ENCODE measurements at regions of chr7 and their contacts with region 1.

Region 1: DNA sequence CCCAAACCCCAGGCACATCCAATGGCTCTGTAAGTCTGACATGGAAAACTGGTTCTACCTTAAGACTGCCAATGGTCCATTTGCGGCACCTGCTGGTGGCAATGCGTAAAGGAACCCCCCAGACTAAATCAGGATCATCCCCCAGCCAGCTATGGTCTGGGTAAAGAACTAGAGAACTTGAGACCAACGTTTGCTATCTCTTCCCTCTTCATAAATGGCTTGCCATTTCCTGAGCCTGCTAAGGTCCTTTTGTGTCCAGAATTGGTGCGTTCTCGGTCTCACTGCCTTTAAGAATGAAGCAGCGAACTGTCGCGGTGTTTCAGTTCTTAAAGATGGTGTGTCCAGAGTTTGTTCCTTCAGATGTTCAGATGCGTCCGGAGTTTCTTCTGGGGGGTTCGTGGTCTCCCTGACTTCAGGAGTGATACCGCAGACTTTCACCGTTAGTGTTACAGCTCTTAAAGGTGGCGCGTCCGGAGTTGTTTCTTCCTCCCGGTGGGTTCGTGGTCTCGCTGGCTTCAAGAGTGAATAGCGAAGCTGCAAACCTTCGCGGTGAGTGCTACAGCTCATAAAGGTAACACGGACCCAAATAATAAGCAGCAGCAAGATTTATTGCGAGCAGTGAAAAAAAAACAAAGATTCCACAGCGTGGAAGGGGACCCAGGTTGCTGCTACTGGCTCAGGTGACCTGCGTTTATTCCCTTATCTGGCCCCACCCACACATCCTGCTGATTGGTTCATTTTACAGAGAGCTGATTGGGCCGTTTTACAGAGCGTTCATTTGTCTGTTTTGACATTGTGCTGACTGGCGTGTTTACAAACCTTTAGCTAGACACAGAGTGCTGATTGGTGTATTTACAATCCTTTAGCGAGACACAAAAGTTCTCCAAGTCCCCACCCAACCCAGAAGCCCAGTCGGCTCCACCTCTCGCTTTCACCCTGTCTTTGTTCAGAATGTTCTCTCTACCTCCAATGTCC is 95.4 kb downstream of the ELMO1 start:
- DNase-seq: peak; percentile 37 to 90 (median 82)
- ATAC-seq: peak; percentile 91
- H3K4me3 ChIP-seq: peak overlapping the region; percentile 93
- H3K4me3 Mint-ChIP-seq: peak overlapping the region; percentile 84 to 98 (median 95)
- H3K27ac ChIP-seq: peak overlapping the region; percentile 75
- H3K27ac Mint-ChIP-seq: peak overlapping the region; percentile 86 to 97 (median 92)
- H3K4me1 ChIP-seq: peaks cover 15 to 44% of the 10 kb centered on the region in 2 donors
- H3K4me1 Mint-ChIP-seq: peaks cover 71 to 97% (median 93%) of the 10 kb centered on the region in 7 donors
- H3K27me3 ChIP-seq: no peaks in the 10 kb centered on the region
- H3K27me3 Mint-ChIP-seq: no peaks in the 10 kb centered on the region

Region 2: GRCh38 chr7:36389371-36390198 is 963.7 kb before region 1 on chr7 and contains the start of gene ANLN:
- CTCF ChIA-PET with region 1: no interaction called
- POLR2A ChIA-PET with region 1: no interaction called
- intact Hi-C with region 1: loop called in 1 of 2 experiments (anchors 5 kb)
- DNase-seq: peak; percentile 71 to 91 (median 82)
- ATAC-seq: peak; percentile 98
- H3K4me3 ChIP-seq: peak within 1 kb of the TSS; percentile 78
- H3K4me3 Mint-ChIP-seq: peak within 1 kb of the TSS; percentile 77 to 90 (median 85)
- H3K27ac ChIP-seq: peak within 1 kb of the TSS; percentile 67
- H3K27ac Mint-ChIP-seq: peak within 1 kb of the TSS; percentile 72 to 90 (median 81)
- H3K4me1 ChIP-seq: peaks cover 8 to 19% of the 10 kb centered on the region in 2 donors
- H3K4me1 Mint-ChIP-seq: peaks cover 12 to 39% (median 26%) of the 10 kb centered on the region in 7 donors
- H3K27me3 ChIP-seq: no peaks in the 10 kb centered on the region
- H3K27me3 Mint-ChIP-seq: peaks cover 0 to 12% (median 0%) of the 10 kb centered on the region in 5 donors
- total RNA-seq, gene ANLN: 0.35 to 48.6 (median 0.82) TPM

Region 3: GRCh38 chr7:37045681-37046179 is 307.5 kb before region 1 on chr7:
- CTCF ChIA-PET with region 1: no interaction called
- POLR2A ChIA-PET with region 1: no interaction called
- intact Hi-C with region 1: no loop called
- DNase-seq: no peak
- ATAC-seq: no peak
- H3K4me3 ChIP-seq: no peak overlapping the region
- H3K4me3 Mint-ChIP-seq: no peak overlapping the region
- H3K27ac ChIP-seq: no peak overlapping the region
- H3K27ac Mint-ChIP-seq: peak overlapping the region in 2 of 9 donors; percentile 6 to 36
- H3K4me1 ChIP-seq: no peaks in the 10 kb centered on the region
- H3K4me1 Mint-ChIP-seq: peaks cover 5 to 31% (median 21%) of the 10 kb centered on the region in 7 donors
- H3K27me3 ChIP-seq: no peaks in the 10 kb centered on the region
- H3K27me3 Mint-ChIP-seq: no peaks in the 10 kb centered on the region

Region 4: DNA sequence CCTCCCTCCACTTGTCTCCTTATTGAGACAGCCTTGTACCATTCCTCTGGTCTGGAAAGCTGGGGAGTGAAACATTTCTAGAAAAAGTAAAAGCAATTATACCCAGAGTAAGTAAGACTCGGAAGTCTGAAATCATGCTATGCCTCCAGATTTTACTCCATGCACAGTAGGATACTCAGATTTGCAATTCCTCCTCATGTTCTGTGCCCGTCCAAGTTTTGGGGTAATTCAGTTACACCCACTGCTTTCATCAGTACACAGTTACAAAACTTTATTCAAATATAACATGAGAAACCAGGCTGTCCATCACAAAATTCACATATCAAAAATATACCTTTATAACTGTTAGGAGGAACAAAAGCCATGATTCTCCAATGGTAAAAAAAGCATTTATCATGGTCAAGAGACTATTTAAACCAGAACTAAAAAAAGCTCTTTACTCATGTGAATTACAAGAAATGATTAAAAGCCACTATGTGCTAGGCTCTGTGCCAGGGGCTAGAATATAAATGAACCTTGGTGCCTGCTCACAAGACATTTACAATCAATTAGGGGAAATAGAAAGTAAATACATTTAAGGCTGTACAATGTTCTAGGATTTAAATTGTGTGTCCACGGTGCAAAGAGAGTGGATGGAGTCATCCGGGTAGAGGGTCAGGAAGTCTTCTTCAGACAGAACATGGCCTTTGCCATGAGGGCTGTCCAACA is 224.8 kb before region 1 on chr7:
- CTCF ChIA-PET with region 1: no interaction called
- POLR2A ChIA-PET with region 1: no interaction called
- intact Hi-C with region 1: no loop called
- DNase-seq: no peak
- ATAC-seq: no peak
- H3K4me3 ChIP-seq: no peak overlapping the region
- H3K4me3 Mint-ChIP-seq: no peak overlapping the region
- H3K27ac ChIP-seq: no peak overlapping the region
- H3K27ac Mint-ChIP-seq: peak overlapping the region in 4 of 9 donors; percentile 2 to 71 (median 35)
- H3K4me1 ChIP-seq: no peaks in the 10 kb centered on the region
- H3K4me1 Mint-ChIP-seq: peaks cover 6 to 27% (median 17%) of the 10 kb centered on the region in 7 donors
- H3K27me3 ChIP-seq: no peaks in the 10 kb centered on the region
- H3K27me3 Mint-ChIP-seq: no peaks in the 10 kb centered on the region

Region 5: GRCh38 chr7:37208528-37208927 is 144.7 kb before region 1 on chr7:
- CTCF ChIA-PET with region 1: interaction called, 14 read pairs
- POLR2A ChIA-PET with region 1: no interaction called
- intact Hi-C with region 1: loop called (anchors 1 kb)
- DNase-seq: peak in 7 of 9 donors; percentile 17 to 56 (median 33)
- ATAC-seq: peak; percentile 77
- H3K4me3 ChIP-seq: no peak overlapping the region
- H3K4me3 Mint-ChIP-seq: no peak overlapping the region
- H3K27ac ChIP-seq: no peak overlapping the region
- H3K27ac Mint-ChIP-seq: peak overlapping the region; percentile 25 to 89 (median 71)
- H3K4me1 ChIP-seq: no peaks in the 10 kb centered on the region
- H3K4me1 Mint-ChIP-seq: peaks cover 0 to 17% (median 8%) of the 10 kb centered on the region in 7 donors
- H3K27me3 ChIP-seq: no peaks in the 10 kb centered on the region
- H3K27me3 Mint-ChIP-seq: no peaks in the 10 kb centered on the region

Region 6: DNA sequence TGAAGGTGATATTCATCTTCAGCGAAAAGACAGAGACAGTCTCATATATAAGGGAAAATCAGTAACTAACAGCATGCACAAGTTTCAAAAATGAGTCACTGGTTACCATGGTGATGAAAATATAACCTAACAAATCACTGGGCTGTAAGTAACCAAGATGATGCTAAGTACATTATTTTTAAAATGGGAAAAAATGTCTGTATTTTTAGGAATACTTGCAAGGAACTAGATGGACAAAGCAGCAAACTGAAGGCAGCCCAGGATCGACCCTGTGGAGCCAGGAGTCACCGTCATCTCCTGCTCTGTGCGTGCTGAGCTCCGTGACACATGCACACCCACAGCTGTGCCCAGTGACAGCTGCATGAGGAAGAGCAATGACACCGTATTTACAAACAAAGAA is 41.9 kb before region 1 on chr7:
- CTCF ChIA-PET with region 1: interaction called, 6 read pairs
- POLR2A ChIA-PET with region 1: interaction called, 5 read pairs
- intact Hi-C with region 1: loop called in 1 of 2 experiments (anchors 2 kb)
- DNase-seq: peak in 5 of 9 donors; percentile 27 to 36 (median 34)
- ATAC-seq: peak; percentile 61
- H3K4me3 ChIP-seq: no peak overlapping the region
- H3K4me3 Mint-ChIP-seq: peak overlapping the region in 7 of 10 donors; percentile 52 to 88 (median 66)
- H3K27ac ChIP-seq: peak overlapping the region; percentile 38
- H3K27ac Mint-ChIP-seq: peak overlapping the region in 7 of 9 donors; percentile 79 to 98 (median 97)
- H3K4me1 ChIP-seq: peaks cover 26 to 52% of the 10 kb centered on the region in 2 donors
- H3K4me1 Mint-ChIP-seq: peaks cover 50 to 85% (median 68%) of the 10 kb centered on the region in 7 donors
- H3K27me3 ChIP-seq: no peaks in the 10 kb centered on the region
- H3K27me3 Mint-ChIP-seq: no peaks in the 10 kb centered on the region

Region 7: GRCh38 chr7:37408291-37409228 is 55.3 kb after region 1 on chr7:
- CTCF ChIA-PET with region 1: interaction called, 5 read pairs
- POLR2A ChIA-PET with region 1: interaction called, 8 read pairs
- intact Hi-C with region 1: loop called (anchors 1 to 2 kb)
- DNase-seq: peak in 7 of 9 donors; percentile 14 to 58 (median 32)
- ATAC-seq: peak; percentile 57
- H3K4me3 ChIP-seq: peak overlapping the region; percentile 29
- H3K4me3 Mint-ChIP-seq: peak overlapping the region; percentile 66 to 91 (median 88)
- H3K27ac ChIP-seq: peak overlapping the region; percentile 54
- H3K27ac Mint-ChIP-seq: peak overlapping the region; percentile 86 to 95 (median 90)
- H3K4me1 ChIP-seq: peaks cover 19 to 34% of the 10 kb centered on the region in 2 donors
- H3K4me1 Mint-ChIP-seq: peaks cover 53 to 93% (median 86%) of the 10 kb centered on the region in 7 donors
- H3K27me3 ChIP-seq: no peaks in the 10 kb centered on the region
- H3K27me3 Mint-ChIP-seq: no peaks in the 10 kb centered on the region

Region 8: DNA sequence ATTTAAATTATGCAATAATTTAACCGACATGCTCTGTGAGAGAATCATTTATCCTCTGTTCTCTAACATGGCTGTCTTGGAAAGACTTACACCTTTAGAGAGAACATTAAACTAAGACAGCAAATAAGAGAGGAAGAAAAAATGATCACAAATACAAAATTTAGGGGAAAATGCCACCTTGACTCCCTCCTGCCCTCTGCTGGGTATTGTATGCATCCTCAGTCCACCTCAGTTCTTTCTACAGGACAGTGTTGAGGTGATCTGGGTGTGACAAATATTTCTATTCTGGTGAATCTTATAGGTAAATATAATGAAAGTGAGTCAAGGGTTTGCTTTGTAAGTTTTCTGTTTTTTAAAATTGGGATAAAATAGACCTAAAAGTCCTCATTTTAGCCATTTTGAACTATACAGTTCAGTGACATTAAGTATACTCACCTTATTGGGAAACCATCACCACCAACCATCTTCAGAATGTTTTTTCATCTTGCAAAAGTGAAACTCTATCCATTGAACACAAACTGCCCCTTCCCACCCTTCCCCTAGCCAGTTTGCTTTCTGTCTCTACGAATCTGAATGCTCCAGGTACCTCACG is 156.9 kb after region 1 on chr7:
- CTCF ChIA-PET with region 1: interaction called, 4 read pairs
- POLR2A ChIA-PET with region 1: interaction called, 4 read pairs
- intact Hi-C with region 1: loop called in 1 of 2 experiments (anchors 5 kb)
- DNase-seq: peak in 6 of 9 donors; percentile 10 to 41 (median 34)
- ATAC-seq: peak; percentile 69
- H3K4me3 ChIP-seq: no peak overlapping the region
- H3K4me3 Mint-ChIP-seq: no peak overlapping the region
- H3K27ac ChIP-seq: no peak overlapping the region
- H3K27ac Mint-ChIP-seq: no peak overlapping the region
- H3K4me1 ChIP-seq: no peaks in the 10 kb centered on the region
- H3K4me1 Mint-ChIP-seq: no peaks in the 10 kb centered on the region
- H3K27me3 ChIP-seq: no peaks in the 10 kb centered on the region
- H3K27me3 Mint-ChIP-seq: peaks cover 0 to 49% (median 16%) of the 10 kb centered on the region in 5 donors

Region 9: GRCh38 chr7:37577412-37577811 is 224.2 kb after region 1 on chr7:
- CTCF ChIA-PET with region 1: no interaction called
- POLR2A ChIA-PET with region 1: no interaction called
- intact Hi-C with region 1: no loop called
- DNase-seq: no peak
- ATAC-seq: no peak
- H3K4me3 ChIP-seq: no peak overlapping the region
- H3K4me3 Mint-ChIP-seq: no peak overlapping the region
- H3K27ac ChIP-seq: no peak overlapping the region
- H3K27ac Mint-ChIP-seq: no peak overlapping the region
- H3K4me1 ChIP-seq: no peaks in the 10 kb centered on the region
- H3K4me1 Mint-ChIP-seq: no peaks in the 10 kb centered on the region
- H3K27me3 ChIP-seq: no peaks in the 10 kb centered on the region
- H3K27me3 Mint-ChIP-seq: peaks cover 13 to 32% (median 27%) of the 10 kb centered on the region in 5 donors

Measured in naive thymus-derived CD4-positive, alpha-beta T cell (primary cell).